Natural killer cell (primary cell): ENCODE measurements at regions of chr18 and their contacts with region 1.

Region 1: GRCh38 chr18:35290073-35290735 is at the start of gene ZSCAN30:
- DNase-seq: peak; percentile 95 to 97
- ATAC-seq: peak; percentile 93 to 99 (median 96)
- H3K4me3 ChIP-seq: peak within 1 kb of the TSS; percentile 61
- H3K4me3 Mint-ChIP-seq: peak within 1 kb of the TSS; percentile 99
- H3K27ac ChIP-seq: peak within 1 kb of the TSS; percentile 75
- H3K27ac Mint-ChIP-seq: peak within 1 kb of the TSS; percentile 97 to 98
- H3K4me1 ChIP-seq: peaks cover 17% of the 10 kb centered on the region
- H3K4me1 Mint-ChIP-seq: peaks cover 56 to 61% of the 10 kb centered on the region in 2 donors
- H3K27me3 ChIP-seq: no peaks in the 10 kb centered on the region
- H3K27me3 Mint-ChIP-seq: no peaks in the 10 kb centered on the region
- CTCF ChIP-seq: no peak
- total RNA-seq, gene ZSCAN30: 15.4 to 21.0 (median 16.4) TPM

Region 2: GRCh38 chr18:34880882-34881834 is 409.0 kb before region 1 on chr18:
- intact Hi-C with region 1: no loop called
- DNase-seq: no peak
- ATAC-seq: no peak
- H3K4me3 ChIP-seq: no peak overlapping the region
- H3K4me3 Mint-ChIP-seq: no peak overlapping the region
- H3K27ac ChIP-seq: no peak overlapping the region
- H3K27ac Mint-ChIP-seq: no peak overlapping the region
- H3K4me1 ChIP-seq: no peaks in the 10 kb centered on the region
- H3K4me1 Mint-ChIP-seq: no peaks in the 10 kb centered on the region
- H3K27me3 ChIP-seq: peaks cover 2% of the 10 kb centered on the region
- H3K27me3 Mint-ChIP-seq: peaks cover 23 to 39% of the 10 kb centered on the region in 2 donors
- CTCF ChIP-seq: no peak

Region 3: DNA sequence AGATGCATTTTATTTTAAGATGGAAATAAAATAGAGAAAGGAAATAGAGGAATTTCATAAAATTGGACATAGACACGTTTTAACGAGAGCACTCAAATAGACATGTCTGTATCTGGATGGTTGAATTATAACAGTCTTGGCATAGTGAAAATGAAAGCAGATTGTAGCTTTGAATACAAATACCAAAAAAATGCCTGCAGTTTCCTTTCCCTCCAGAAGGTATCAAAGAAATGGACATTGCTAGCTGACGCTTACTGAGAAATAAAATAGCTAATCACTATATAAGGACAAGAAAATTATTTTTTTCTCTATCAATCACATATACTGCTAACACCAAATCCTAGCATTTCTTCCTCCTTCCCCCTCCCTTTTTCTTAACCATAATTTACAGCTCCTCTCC is 260.4 kb before region 1 on chr18:
- intact Hi-C with region 1: no loop called
- DNase-seq: peak in 1 of 2 donors; percentile 71
- ATAC-seq: peak; percentile 74 to 87 (median 77)
- H3K4me3 ChIP-seq: peak overlapping the region; percentile 44
- H3K4me3 Mint-ChIP-seq: peak overlapping the region; percentile 94
- H3K27ac ChIP-seq: peak overlapping the region; percentile 90
- H3K27ac Mint-ChIP-seq: peak overlapping the region; percentile 95
- H3K4me1 ChIP-seq: peaks cover 15% of the 10 kb centered on the region
- H3K4me1 Mint-ChIP-seq: peaks cover 51 to 56% of the 10 kb centered on the region in 2 donors
- H3K27me3 ChIP-seq: no peaks in the 10 kb centered on the region
- H3K27me3 Mint-ChIP-seq: no peaks in the 10 kb centered on the region
- CTCF ChIP-seq: peak; percentile 48

Region 4: GRCh38 chr18:35267161-35267651 is 23.0 kb before region 1 on chr18:
- intact Hi-C with region 1: loop called (anchors 1 kb)
- DNase-seq: peak; percentile 61 to 82
- ATAC-seq: peak; percentile 77 to 85 (median 84)
- H3K4me3 ChIP-seq: peak overlapping the region; percentile 88
- H3K4me3 Mint-ChIP-seq: peak overlapping the region; percentile 97
- H3K27ac ChIP-seq: peak overlapping the region; percentile 94
- H3K27ac Mint-ChIP-seq: peak overlapping the region; percentile 91 to 98
- H3K4me1 ChIP-seq: peaks cover 18% of the 10 kb centered on the region
- H3K4me1 Mint-ChIP-seq: peaks cover 23 to 33% of the 10 kb centered on the region in 2 donors
- H3K27me3 ChIP-seq: no peaks in the 10 kb centered on the region
- H3K27me3 Mint-ChIP-seq: no peaks in the 10 kb centered on the region
- CTCF ChIP-seq: no peak

Region 5: DNA sequence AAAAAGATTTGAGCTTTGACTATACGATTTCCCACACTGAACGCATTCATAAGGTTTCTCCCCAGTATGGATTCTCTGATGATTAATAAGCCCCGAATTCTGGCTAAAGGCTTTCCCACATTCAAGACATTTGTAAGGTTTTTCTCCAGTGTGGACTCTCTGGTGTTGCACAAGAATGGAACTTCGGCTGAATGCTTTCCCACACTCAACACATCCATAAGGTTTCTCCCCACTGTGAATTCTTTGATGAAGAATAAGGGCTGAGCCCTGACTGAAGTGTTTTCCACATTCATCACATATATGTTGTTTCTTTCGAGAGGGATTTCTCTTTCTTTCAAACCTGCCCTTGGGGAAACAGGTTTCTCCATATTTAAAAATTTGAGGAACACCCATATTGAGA is 47.1 kb after region 1 on chr18:
- intact Hi-C with region 1: no loop called
- DNase-seq: no peak
- ATAC-seq: no peak
- H3K4me3 ChIP-seq: no peak overlapping the region
- H3K4me3 Mint-ChIP-seq: no peak overlapping the region
- H3K27ac ChIP-seq: no peak overlapping the region
- H3K27ac Mint-ChIP-seq: peak overlapping the region; percentile 13 to 17
- H3K4me1 ChIP-seq: no peaks in the 10 kb centered on the region
- H3K4me1 Mint-ChIP-seq: peaks cover 34 to 41% of the 10 kb centered on the region in 2 donors
- H3K27me3 ChIP-seq: no peaks in the 10 kb centered on the region
- H3K27me3 Mint-ChIP-seq: no peaks in the 10 kb centered on the region
- CTCF ChIP-seq: no peak

Region 6: DNA sequence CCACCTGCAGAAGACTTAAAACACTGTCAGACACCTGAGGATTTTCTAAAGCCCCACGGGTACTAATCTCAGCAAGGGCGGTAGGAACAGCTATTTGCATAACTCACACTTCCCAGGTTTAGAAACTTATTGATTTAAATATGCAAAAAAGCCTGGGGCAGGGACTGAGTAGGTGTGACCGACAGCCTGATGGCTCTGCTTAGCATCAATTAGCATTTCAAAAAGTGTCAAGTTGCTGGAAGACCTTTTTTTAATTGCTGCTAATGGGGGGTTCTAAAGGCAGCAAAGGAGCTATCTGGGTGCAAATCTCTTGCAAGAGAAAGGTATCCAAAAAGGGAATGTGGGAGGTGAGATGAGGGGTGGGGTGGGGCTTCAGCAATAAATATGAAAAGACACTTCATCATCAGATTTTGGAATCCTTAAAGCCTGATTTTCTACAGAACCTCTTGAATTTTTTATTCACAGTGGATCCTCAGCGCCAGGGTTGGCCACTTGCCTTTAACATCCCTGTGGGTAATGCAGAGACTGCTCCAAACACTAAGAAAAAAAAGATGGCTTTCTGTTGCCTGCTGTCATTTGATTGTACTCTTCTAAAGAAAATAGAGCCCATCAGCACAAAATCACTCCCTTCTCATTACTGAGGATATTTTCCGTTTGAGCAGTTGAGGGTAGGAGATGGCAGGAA is 561.2 kb after region 1 on chr18:
- intact Hi-C with region 1: no loop called
- DNase-seq: no peak
- ATAC-seq: no peak
- H3K4me3 ChIP-seq: no peak overlapping the region
- H3K4me3 Mint-ChIP-seq: no peak overlapping the region
- H3K27ac ChIP-seq: no peak overlapping the region
- H3K27ac Mint-ChIP-seq: no peak overlapping the region
- H3K4me1 ChIP-seq: no peaks in the 10 kb centered on the region
- H3K4me1 Mint-ChIP-seq: no peaks in the 10 kb centered on the region
- H3K27me3 ChIP-seq: no peaks in the 10 kb centered on the region
- H3K27me3 Mint-ChIP-seq: peaks cover 2 to 20% of the 10 kb centered on the region in 2 donors
- CTCF ChIP-seq: no peak